ENCODE measurements at regions of chr16 and their contacts with region 1.

Region 1: GRCh38 chr16:9134739-9135138 is 43.3 kb downstream of the HAPSTR1 start:
- DNase-seq: peak; percentile 85
- H3K4me3 Mint-ChIP-seq: no peak overlapping the region
- H3K27ac Mint-ChIP-seq: no peak overlapping the region
- H3K4me1 Mint-ChIP-seq: peaks cover 7% of the 10 kb centered on the region
- H3K27me3 Mint-ChIP-seq: peaks cover 4% of the 10 kb centered on the region

Region 2: DNA sequence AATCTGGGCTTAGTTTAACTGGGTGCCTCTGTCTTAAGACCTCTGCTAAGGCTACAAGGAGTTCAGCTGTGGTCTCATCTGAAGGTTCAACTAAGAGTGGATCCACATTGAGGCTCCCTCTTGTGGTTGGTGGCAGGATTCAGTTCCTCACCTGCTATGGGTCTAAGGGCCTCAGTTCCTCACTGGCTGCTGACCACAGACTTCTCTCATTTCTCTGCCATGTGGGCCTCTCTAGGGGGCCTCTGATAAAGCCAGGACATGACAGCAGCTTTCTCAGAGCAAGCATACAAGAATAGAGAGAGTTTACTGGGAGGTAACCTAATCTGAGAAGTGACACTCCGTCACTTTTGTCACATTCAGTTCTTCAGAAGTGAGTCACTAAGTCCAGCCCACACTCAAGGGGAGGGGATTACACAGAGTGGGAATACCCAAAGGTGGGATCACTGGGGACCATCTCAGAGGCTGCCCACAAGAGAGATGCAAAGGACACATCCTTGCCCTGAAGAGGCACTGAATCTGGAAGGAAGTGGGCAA is 479.5 kb before region 1 on chr16:
- CTCF ChIA-PET with region 1: no interaction called
- intact Hi-C with region 1: loop called (anchors 5 kb)
- DNase-seq: peak; percentile 66
- H3K4me3 Mint-ChIP-seq: no peak overlapping the region
- H3K27ac Mint-ChIP-seq: no peak overlapping the region
- H3K4me1 Mint-ChIP-seq: peaks cover 5% of the 10 kb centered on the region
- H3K27me3 Mint-ChIP-seq: no peaks in the 10 kb centered on the region

Region 3: DNA sequence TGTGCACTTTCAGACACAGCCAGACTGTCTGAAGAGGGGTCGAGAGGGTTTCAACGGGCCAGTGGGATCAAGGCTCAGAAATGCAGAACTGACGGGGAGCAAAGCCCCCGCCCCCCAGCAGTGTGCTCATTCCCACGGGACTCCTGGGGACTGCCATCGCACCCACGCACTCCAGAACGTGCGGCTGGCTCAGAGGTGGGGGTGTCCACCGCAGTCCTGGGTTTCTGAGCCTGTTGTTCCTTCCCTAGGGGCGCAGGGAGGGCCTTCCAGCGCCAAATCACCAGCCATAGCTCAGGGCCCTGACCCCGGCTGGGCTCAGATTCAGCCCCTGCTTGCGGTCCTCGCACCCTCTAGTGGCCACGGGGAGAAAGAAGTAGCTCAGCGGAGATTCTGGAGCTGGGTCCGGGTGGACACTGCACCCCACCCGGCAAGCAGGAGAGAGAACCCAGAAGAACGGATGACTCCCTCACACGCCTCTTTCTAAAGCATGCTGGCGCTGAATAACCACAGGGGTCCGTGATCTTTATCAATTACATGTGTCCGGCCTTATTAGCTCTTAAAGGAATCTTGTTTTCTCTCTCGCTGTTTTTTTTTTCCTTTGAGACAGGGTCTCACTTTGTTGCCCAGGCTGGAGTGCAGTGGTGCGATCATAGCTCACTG is 126.0 kb before region 1 on chr16:
- CTCF ChIA-PET with region 1: interaction called, 18 read pairs
- intact Hi-C with region 1: loop called (anchors 5 kb)
- DNase-seq: peak; percentile 78
- H3K4me3 Mint-ChIP-seq: no peak overlapping the region
- H3K27ac Mint-ChIP-seq: no peak overlapping the region
- H3K4me1 Mint-ChIP-seq: peaks cover 4% of the 10 kb centered on the region
- H3K27me3 Mint-ChIP-seq: peaks cover 9% of the 10 kb centered on the region

Region 4: GRCh38 chr16:9151597-9151996 is 16.9 kb after region 1 on chr16:
- CTCF ChIA-PET with region 1: interaction called, 14 read pairs
- intact Hi-C with region 1: no loop called
- DNase-seq: no peak
- H3K4me3 Mint-ChIP-seq: no peak overlapping the region
- H3K27ac Mint-ChIP-seq: no peak overlapping the region
- H3K4me1 Mint-ChIP-seq: no peaks in the 10 kb centered on the region
- H3K27me3 Mint-ChIP-seq: peaks cover 6% of the 10 kb centered on the region

Region 5: GRCh38 chr16:10181196-10182162 is 1046.7 kb after region 1 on chr16:
- CTCF ChIA-PET with region 1: no interaction called
- intact Hi-C with region 1: loop called (anchors 1 kb)
- DNase-seq: peak; percentile 50
- H3K4me3 Mint-ChIP-seq: no peak overlapping the region
- H3K27ac Mint-ChIP-seq: no peak overlapping the region
- H3K4me1 Mint-ChIP-seq: peaks cover 16% of the 10 kb centered on the region
- H3K27me3 Mint-ChIP-seq: peaks cover 43% of the 10 kb centered on the region

Region 6: GRCh38 chr16:10339777-10340732 is 1205.3 kb after region 1 on chr16:
- CTCF ChIA-PET with region 1: no interaction called
- intact Hi-C with region 1: no loop called
- DNase-seq: no peak
- H3K4me3 Mint-ChIP-seq: no peak overlapping the region
- H3K27ac Mint-ChIP-seq: peak overlapping the region; percentile 19
- H3K4me1 Mint-ChIP-seq: no peaks in the 10 kb centered on the region
- H3K27me3 Mint-ChIP-seq: no peaks in the 10 kb centered on the region